ENCODE measurements at regions of chr6 and their contacts with region 1.

Region 1: DNA sequence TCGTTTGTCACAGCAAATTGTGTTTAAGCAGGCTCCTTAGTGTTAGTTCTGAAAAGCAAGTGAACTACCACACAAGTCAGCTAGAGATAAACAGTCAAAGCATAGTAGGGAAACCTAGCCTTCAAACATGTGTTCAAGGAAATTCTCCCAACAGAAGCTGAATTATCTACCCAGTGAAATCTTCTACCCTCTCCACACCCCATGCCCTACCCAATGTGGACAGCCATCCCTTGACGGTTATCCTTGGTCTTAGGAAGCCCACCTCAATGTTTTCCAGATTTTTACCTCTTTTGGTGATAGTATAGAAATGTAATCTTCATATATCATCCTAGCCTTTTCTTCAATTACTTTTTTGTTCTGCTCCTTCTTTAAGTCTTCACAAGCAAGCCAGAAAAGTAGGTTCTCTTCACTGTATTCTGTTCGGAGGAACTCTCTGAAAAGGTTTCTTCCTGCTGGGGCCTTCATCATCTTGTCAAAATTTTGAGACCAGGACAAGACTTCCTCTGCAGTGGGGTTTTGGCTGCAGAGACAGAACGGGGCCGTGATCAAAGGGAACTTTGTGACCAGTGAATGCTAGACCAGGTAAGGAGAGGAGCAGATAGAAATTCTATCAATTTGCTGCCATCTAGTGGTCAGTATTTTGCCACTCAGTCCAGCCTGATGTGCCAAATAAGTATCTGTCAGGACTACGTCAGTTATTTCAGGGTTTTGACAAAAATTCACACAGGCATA is 21.6 kb upstream of the MTRF1L start:
- DNase-seq: peak in 6 of 7 donors; percentile 19 to 63 (median 36)
- H3K4me3 ChIP-seq: no peak overlapping the region
- H3K27ac ChIP-seq: no peak overlapping the region
- H3K4me1 ChIP-seq: peaks cover 0 to 5% of the 10 kb centered on the region in 2 donors
- H3K27me3 ChIP-seq: no peaks in the 10 kb centered on the region
- CTCF ChIP-seq: peak; percentile 53 to 83 (median 66)
- POLR2A ChIP-seq: no peak

Region 2: GRCh38 chr6:152863618-152864326 is 160.4 kb before region 1 on chr6:
- intact Hi-C with region 1: loop called (anchors 10 kb)
- DNase-seq: peak; percentile 51 to 86 (median 74)
- H3K4me3 ChIP-seq: no peak overlapping the region
- H3K27ac ChIP-seq: no peak overlapping the region
- H3K4me1 ChIP-seq: no peaks in the 10 kb centered on the region
- H3K27me3 ChIP-seq: no peaks in the 10 kb centered on the region
- CTCF ChIP-seq: peak; percentile 62 to 80 (median 69)
- POLR2A ChIP-seq: no peak

Region 3: GRCh38 chr6:152957796-152958195 is 66.3 kb before region 1 on chr6:
- intact Hi-C with region 1: loop called in 1 of 2 experiments (anchors 5 kb)
- DNase-seq: no peak
- H3K4me3 ChIP-seq: no peak overlapping the region
- H3K27ac ChIP-seq: no peak overlapping the region
- H3K4me1 ChIP-seq: no peaks in the 10 kb centered on the region
- H3K27me3 ChIP-seq: peaks cover 5% of the 10 kb centered on the region
- CTCF ChIP-seq: no peak
- POLR2A ChIP-seq: no peak

Measured in adrenal gland (tissue), 19 donors.